Sigmoid colon (tissue), 7 donors: ENCODE measurements at regions of chr1 and their contacts with region 1.

Region 1: GRCh38 chr1:48061162-48062136 is 64.3 kb upstream of the TRABD2B start:
- DNase-seq: no peak
- H3K4me3 ChIP-seq: no peak overlapping the region
- H3K27ac ChIP-seq: no peak overlapping the region
- H3K4me1 ChIP-seq: no peaks in the 10 kb centered on the region
- H3K27me3 ChIP-seq: peaks cover 0 to 4% (median 0%) of the 10 kb centered on the region in 3 donors
- CTCF ChIP-seq: peak in 3 of 4 experiments; percentile 14 to 55 (median 38)
- EP300 ChIP-seq: no peak
- POLR2A ChIP-seq: no peak

Region 2: GRCh38 chr1:47738560-47739182 is 322.8 kb before region 1 on chr1:
- intact Hi-C with region 1: loop called (anchors 5 kb)
- DNase-seq: no peak
- H3K4me3 ChIP-seq: no peak overlapping the region
- H3K27ac ChIP-seq: no peak overlapping the region
- H3K4me1 ChIP-seq: no peaks in the 10 kb centered on the region
- H3K27me3 ChIP-seq: peaks cover 0 to 18% (median 3%) of the 10 kb centered on the region in 3 donors
- CTCF ChIP-seq: peak; percentile 27 to 75 (median 52)
- EP300 ChIP-seq: no peak
- POLR2A ChIP-seq: no peak

Region 3: GRCh38 chr1:47997289-47998200 is 63.9 kb before region 1 on chr1 and contains the start of gene TRABD2B:
- intact Hi-C with region 1: loop called (anchors 2 kb)
- DNase-seq: peak; percentile 87
- H3K4me3 ChIP-seq: peak within 1 kb of the TSS; percentile 49 to 77 (median 62)
- H3K27ac ChIP-seq: peak within 1 kb of the TSS; percentile 76 to 88 (median 78)
- H3K4me1 ChIP-seq: peaks cover 0 to 17% (median 12%) of the 10 kb centered on the region in 4 donors
- H3K27me3 ChIP-seq: peaks cover 4 to 32% (median 25%) of the 10 kb centered on the region in 3 donors
- CTCF ChIP-seq: peak; percentile 80 to 96 (median 87)
- EP300 ChIP-seq: no peak
- POLR2A ChIP-seq: no peak
- total RNA-seq, gene TRABD2B: 0.66 to 1.4 (median 1.0) TPM

Region 4: DNA sequence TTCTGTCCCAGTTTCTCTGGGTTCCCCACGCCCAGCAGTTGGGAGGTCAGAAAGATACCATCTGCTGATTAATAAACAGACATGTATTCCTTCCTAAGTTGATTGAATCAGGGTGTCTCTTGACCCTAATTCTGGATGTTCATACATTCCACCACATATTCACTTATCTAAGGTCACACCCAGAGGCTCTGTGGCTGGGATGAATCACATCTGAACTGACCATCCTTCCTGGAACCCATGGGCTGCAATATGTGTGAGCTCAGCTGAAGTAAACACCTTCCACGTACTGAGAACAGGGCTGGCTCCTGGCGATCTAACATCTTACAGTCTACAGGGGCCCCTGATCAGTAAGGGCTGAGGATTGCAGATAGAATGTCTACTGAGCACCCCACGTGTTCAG is 43.7 kb before region 1 on chr1:
- intact Hi-C with region 1: no loop called
- DNase-seq: no peak
- H3K4me3 ChIP-seq: no peak overlapping the region
- H3K27ac ChIP-seq: peak overlapping the region in 2 of 4 donors; percentile 47 to 57
- H3K4me1 ChIP-seq: peaks cover 0 to 9% (median 5%) of the 10 kb centered on the region in 4 donors
- H3K27me3 ChIP-seq: no peaks in the 10 kb centered on the region
- CTCF ChIP-seq: no peak
- EP300 ChIP-seq: no peak
- POLR2A ChIP-seq: no peak